Ovary (tissue), 10 donors: ENCODE measurements at regions of chr5 and their contacts with region 1.

Region 1: GRCh38 chr5:143837306-143837848 is 25.4 kb downstream of the HMHB1 start:
- DNase-seq: no peak
- H3K4me3 ChIP-seq: no peak overlapping the region
- H3K27ac ChIP-seq: no peak overlapping the region
- H3K4me1 ChIP-seq: no peaks in the 10 kb centered on the region
- H3K27me3 ChIP-seq: no peaks in the 10 kb centered on the region
- CTCF ChIP-seq: no peak
- EP300 ChIP-seq: no peak
- POLR2A ChIP-seq: no peak

Region 2: GRCh38 chr5:143865426-143866025 is 28.1 kb after region 1 on chr5:
- intact Hi-C with region 1: loop called in 1 of 4 experiments (anchors 1 kb)
- DNase-seq: no peak
- H3K4me3 ChIP-seq: no peak overlapping the region
- H3K27ac ChIP-seq: no peak overlapping the region
- H3K4me1 ChIP-seq: no peaks in the 10 kb centered on the region
- H3K27me3 ChIP-seq: no peaks in the 10 kb centered on the region
- CTCF ChIP-seq: no peak
- EP300 ChIP-seq: no peak
- POLR2A ChIP-seq: no peak

Region 3: GRCh38 chr5:143957455-143957854 is 120.1 kb after region 1 on chr5:
- intact Hi-C with region 1: no loop called
- DNase-seq: no peak
- H3K4me3 ChIP-seq: no peak overlapping the region
- H3K27ac ChIP-seq: no peak overlapping the region
- H3K4me1 ChIP-seq: no peaks in the 10 kb centered on the region
- H3K27me3 ChIP-seq: no peaks in the 10 kb centered on the region
- CTCF ChIP-seq: no peak
- EP300 ChIP-seq: no peak
- POLR2A ChIP-seq: no peak